Mammary epithelial cell (primary cell): ENCODE measurements at regions of chr18 and their contacts with region 1.

Region 1: GRCh38 chr18:22542401-22542835 is 124.7 kb upstream of the CTAGE1 start:
- DNase-seq: peak; percentile 60
- H3K4me3 ChIP-seq: no peak overlapping the region
- H3K27ac ChIP-seq: no peak overlapping the region
- H3K4me1 ChIP-seq: peaks cover 25% of the 10 kb centered on the region
- H3K27me3 ChIP-seq: no peaks in the 10 kb centered on the region
- CTCF ChIP-seq: no peak

Region 2: GRCh38 chr18:22159014-22159413 is 383.4 kb before region 1 on chr18:
- CTCF ChIA-PET with region 1: no interaction called
- dilution Hi-C with region 1: no loop called
- in situ Hi-C with region 1: no loop called
- intact Hi-C with region 1: no loop called
- DNase-seq: no peak
- H3K4me3 ChIP-seq: no peak overlapping the region
- H3K27ac ChIP-seq: no peak overlapping the region
- H3K4me1 ChIP-seq: no peaks in the 10 kb centered on the region
- H3K27me3 ChIP-seq: peaks cover 16% of the 10 kb centered on the region
- CTCF ChIP-seq: no peak

Region 3: GRCh38 chr18:22471546-22472131 is 70.8 kb before region 1 on chr18:
- CTCF ChIA-PET with region 1: no interaction called
- dilution Hi-C with region 1: no loop called
- in situ Hi-C with region 1: no loop called
- intact Hi-C with region 1: loop called (anchors 10 kb)
- DNase-seq: no peak
- H3K4me3 ChIP-seq: no peak overlapping the region
- H3K27ac ChIP-seq: no peak overlapping the region
- H3K4me1 ChIP-seq: peaks cover 11% of the 10 kb centered on the region
- H3K27me3 ChIP-seq: no peaks in the 10 kb centered on the region
- CTCF ChIP-seq: no peak

Region 4: DNA sequence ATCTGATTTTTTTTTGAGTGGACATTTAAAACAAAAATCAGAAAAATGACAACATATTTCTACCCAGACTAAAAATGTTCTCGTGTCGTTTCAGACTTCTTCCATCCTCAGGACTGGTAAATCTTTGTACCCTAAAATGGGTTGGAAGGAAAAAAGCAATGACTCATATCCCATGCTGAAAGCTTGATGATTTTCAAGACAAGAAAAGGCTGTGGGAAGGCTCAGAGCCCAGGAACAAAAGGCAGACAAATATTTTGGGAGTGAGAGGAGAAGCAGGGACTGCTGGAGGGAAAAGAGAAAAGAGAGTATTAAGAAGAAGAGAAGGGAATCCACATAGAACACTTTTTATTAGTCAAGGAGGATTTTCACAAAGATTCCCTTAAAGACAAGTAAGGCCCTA is 47.6 kb before region 1 on chr18:
- CTCF ChIA-PET with region 1: no interaction called
- dilution Hi-C with region 1: loop called (anchors 5 kb)
- in situ Hi-C with region 1: no loop called
- intact Hi-C with region 1: no loop called
- DNase-seq: peak; percentile 29
- H3K4me3 ChIP-seq: no peak overlapping the region
- H3K27ac ChIP-seq: no peak overlapping the region
- H3K4me1 ChIP-seq: peaks cover 9% of the 10 kb centered on the region
- H3K27me3 ChIP-seq: no peaks in the 10 kb centered on the region
- CTCF ChIP-seq: no peak

Region 5: GRCh38 chr18:22601481-22601880 is 59.1 kb after region 1 on chr18:
- CTCF ChIA-PET with region 1: no interaction called
- dilution Hi-C with region 1: no loop called
- in situ Hi-C with region 1: no loop called
- intact Hi-C with region 1: no loop called
- DNase-seq: no peak
- H3K4me3 ChIP-seq: no peak overlapping the region
- H3K27ac ChIP-seq: no peak overlapping the region
- H3K4me1 ChIP-seq: peaks cover 15% of the 10 kb centered on the region
- H3K27me3 ChIP-seq: peaks cover 5% of the 10 kb centered on the region
- CTCF ChIP-seq: no peak